AG04449 (cell line): ENCODE measurements at regions of chr2 and their contacts with region 1.

Region 1: DNA sequence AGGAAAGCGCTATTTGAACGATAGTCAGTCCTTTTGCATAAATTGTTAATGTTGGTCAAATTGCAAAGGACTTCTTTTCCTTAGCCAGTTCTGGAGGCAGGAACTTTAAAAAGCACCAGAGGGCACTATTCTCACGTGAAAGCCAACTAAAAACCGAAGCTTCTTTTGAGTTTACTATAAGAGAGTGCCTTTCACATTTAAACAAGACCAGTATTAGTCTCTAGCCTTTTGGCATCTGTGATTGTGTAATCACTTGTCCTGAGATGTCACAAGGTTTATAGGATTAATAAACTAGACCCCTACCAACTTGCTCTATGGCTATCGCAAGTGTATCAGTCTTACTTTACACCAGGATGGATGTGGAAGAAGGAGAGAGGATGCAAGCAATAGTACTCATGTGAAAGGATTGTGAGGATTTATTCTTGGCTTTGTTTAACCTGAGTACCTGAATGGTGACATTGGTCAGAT is 14.4 kb upstream of the STAT4 start:
- DNase-seq: no peak
- H3K4me3 ChIP-seq: no peak overlapping the region
- CTCF ChIP-seq: peak; percentile 49

Region 2: GRCh38 chr2:191051825-191052778 is 113.1 kb before region 1 on chr2:
- CTCF ChIA-PET with region 1: interaction called, 542 read pairs
- POLR2A ChIA-PET with region 1: interaction called, 3 read pairs
- DNase-seq: no peak
- H3K4me3 ChIP-seq: no peak overlapping the region
- CTCF ChIP-seq: peak; percentile 26

Region 3: DNA sequence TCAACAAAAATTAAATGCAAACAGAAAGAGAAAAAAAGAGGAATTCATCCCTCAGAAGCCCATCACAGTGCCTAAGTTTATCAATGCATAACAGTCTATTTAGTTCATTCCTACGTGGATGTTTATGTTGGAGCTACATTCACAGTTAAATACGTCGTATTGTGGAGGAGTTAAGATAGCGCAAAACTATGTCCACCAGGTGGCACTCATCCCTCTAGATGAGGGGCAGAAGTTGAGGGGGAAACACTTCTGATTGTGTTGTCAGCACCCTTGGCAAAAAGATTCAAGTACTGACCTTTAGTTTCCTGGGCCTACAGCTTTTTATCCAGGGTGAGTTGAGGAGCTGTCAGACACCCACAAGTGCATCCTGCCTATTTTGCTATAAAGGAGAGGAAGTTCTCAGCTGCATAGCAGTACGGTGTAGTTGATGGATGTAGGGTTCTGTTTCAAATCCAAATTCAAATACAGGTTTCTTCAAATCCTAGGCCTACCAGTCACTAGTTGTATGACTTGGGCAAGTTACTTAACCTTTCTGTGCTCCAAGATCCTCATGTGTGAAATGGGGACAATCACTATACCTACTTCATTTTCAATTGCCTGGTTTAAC is 53.2 kb after region 1 on chr2:
- CTCF ChIA-PET with region 1: interaction called, 25 read pairs
- POLR2A ChIA-PET with region 1: no interaction called
- DNase-seq: no peak
- H3K4me3 ChIP-seq: no peak overlapping the region
- CTCF ChIP-seq: peak; percentile 60

Region 4: DNA sequence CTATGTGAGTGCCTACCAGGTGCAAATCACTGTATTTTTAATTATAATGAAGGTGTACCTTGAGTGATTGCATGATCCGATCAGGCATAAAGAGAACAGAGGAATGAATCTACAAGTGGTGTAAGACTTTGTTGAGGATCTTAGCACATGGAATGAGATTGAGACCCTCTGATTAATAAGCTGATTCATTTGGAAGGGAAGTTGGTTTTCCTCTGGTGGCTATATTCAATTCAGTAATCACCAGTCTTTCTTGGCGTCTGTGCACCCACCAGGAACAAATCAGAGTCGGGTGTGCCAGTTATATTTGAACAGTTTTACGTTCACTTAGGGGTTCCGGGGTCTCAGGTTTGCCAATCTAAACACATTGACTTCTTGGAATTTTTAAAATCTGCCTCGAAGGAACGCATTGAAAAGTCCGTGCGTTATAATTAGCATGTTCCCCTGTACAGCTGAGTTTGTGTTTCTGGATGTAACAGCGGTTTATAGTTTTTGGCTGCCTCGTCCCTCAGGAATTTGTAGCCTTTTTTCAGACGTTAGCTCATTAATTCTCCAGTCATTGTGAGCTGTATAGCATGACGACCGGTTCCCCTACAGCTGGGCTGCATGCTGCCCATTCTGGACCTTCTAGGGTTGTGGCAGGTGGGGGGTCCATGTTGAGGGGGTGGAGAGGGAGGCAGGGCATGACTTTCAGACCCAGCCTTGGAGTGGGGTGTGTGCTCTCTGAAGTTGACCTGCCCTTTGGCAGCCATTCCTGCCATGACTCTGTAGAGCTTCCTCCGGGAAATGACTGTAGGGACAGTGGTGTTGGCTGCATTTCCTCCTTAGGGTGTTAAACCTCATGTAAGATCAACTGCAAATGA is 100.3 kb after region 1 on chr2:
- CTCF ChIA-PET with region 1: interaction called, 12 read pairs
- POLR2A ChIA-PET with region 1: interaction called, 5 read pairs
- DNase-seq: peak; percentile 65
- H3K4me3 ChIP-seq: peak overlapping the region; percentile 1
- CTCF ChIP-seq: no peak

Region 5: GRCh38 chr2:191302459-191303139 is 137.4 kb after region 1 on chr2:
- CTCF ChIA-PET with region 1: interaction called, 10 read pairs
- POLR2A ChIA-PET with region 1: no interaction called
- DNase-seq: no peak
- H3K4me3 ChIP-seq: no peak overlapping the region
- CTCF ChIP-seq: peak; percentile 5

Region 6: DNA sequence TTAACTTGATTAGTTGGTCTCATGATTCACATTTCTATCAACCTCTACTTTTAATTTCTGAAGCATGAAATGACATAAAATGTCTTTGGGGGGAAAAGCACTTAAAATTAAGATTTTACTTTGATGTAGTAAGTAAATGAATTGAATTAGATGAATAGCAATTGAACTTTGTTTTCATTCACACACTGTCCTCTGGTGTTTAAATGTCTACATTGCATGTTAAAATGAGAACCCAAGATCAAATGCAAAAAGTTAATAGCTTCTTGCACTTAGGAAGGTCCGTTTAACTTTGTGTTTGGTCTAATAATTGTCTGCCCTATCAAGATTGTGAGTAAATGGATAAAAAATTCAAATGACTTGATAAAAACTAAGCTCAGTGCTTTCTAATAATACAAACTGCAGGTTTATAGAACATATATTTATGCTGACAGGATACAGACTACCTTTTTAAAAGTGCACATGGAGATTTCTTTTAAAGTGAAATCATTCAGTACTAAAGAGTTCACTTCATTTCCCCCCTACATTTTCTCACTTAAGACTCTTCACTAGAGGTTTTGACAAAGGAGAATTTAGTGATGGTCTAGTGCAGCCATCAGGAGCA is 356.5 kb after region 1 on chr2:
- CTCF ChIA-PET with region 1: interaction called, 139 read pairs
- POLR2A ChIA-PET with region 1: no interaction called
- DNase-seq: no peak
- H3K4me3 ChIP-seq: no peak overlapping the region
- CTCF ChIP-seq: peak; percentile 47